Heart left ventricle (tissue), 16 donors: ENCODE measurements at regions of chr3 and their contacts with region 1.

Region 1: GRCh38 chr3:181709537-181710279 is 2.0 kb upstream of the SOX2 start:
- DNase-seq: peak; percentile 43 to 69 (median 64)
- ATAC-seq: peak in 1 of 4 donors; percentile 44
- H3K4me3 ChIP-seq: peak overlapping the region in 1 of 12 donors; percentile 12
- H3K27ac ChIP-seq: no peak overlapping the region
- H3K4me1 ChIP-seq: peaks cover 0 to 34% (median 8%) of the 10 kb centered on the region in 12 donors
- H3K27me3 ChIP-seq: peaks cover 56 to 100% (median 100%) of the 10 kb centered on the region in 9 donors
- CTCF ChIP-seq: peak; percentile 68 to 88 (median 80)
- POLR2A ChIP-seq: no peak

Region 2: DNA sequence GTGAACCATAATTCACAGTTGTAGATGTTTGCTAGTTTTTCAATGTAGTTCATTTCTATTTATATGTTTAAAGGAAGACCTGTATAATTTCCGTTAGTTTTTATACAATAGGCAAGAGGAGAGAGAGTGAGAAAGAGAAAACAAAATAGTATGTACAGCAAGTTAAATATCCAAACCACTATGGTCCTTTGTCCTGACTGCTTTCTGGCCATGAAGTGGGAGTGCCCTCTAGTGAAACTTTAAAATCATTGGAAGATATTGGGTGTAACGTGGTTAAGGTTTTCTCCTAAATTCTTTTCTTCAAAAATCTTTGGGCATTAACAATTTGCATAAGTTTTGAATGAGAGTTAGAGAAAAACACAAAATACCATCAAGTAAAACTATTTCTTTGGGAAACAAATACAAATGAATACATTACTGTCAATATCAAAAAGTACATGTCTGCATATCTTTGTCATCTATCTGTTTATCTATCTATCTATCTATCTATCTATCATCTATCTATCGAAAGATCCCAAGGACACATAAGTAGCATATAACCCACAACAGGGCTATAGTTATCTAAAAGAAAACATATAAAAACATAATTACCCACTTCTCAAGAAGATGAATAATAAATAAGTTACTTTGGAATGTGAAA is 549.0 kb after region 1 on chr3:
- intact Hi-C with region 1: loop called (anchors 2 to 5 kb)
- DNase-seq: no peak
- ATAC-seq: peak in 1 of 4 donors; percentile 81
- H3K4me3 ChIP-seq: no peak overlapping the region
- H3K27ac ChIP-seq: no peak overlapping the region
- H3K4me1 ChIP-seq: no peaks in the 10 kb centered on the region
- H3K27me3 ChIP-seq: peaks cover 0 to 32% (median 7%) of the 10 kb centered on the region in 9 donors
- CTCF ChIP-seq: peak in 11 of 12 donors; percentile 17 to 70 (median 54)
- POLR2A ChIP-seq: no peak